ENCODE measurements at regions of chr11 and their contacts with region 1.

Region 1: GRCh38 chr11:125874556-125875124 is 12.8 kb upstream of the HYLS1 start:
- DNase-seq: peak in 7 of 9 donors; percentile 12 to 52 (median 34)
- ATAC-seq: peak; percentile 75
- H3K4me3 ChIP-seq: no peak overlapping the region
- H3K4me3 Mint-ChIP-seq: peak overlapping the region in 1 of 10 donors; percentile 17
- H3K27ac ChIP-seq: no peak overlapping the region
- H3K27ac Mint-ChIP-seq: no peak overlapping the region
- H3K4me1 ChIP-seq: no peaks in the 10 kb centered on the region
- H3K4me1 Mint-ChIP-seq: no peaks in the 10 kb centered on the region
- H3K27me3 ChIP-seq: no peaks in the 10 kb centered on the region
- H3K27me3 Mint-ChIP-seq: peaks cover 0 to 6% (median 0%) of the 10 kb centered on the region in 5 donors

Region 2: GRCh38 chr11:124961972-124962609 is 912.5 kb before region 1 on chr11:
- CTCF ChIA-PET with region 1: no interaction called
- POLR2A ChIA-PET with region 1: no interaction called
- intact Hi-C with region 1: loop called in 1 of 2 experiments (anchors 5 kb)
- DNase-seq: peak in 7 of 9 donors; percentile 44 to 74 (median 64)
- ATAC-seq: peak; percentile 96
- H3K4me3 ChIP-seq: no peak overlapping the region
- H3K4me3 Mint-ChIP-seq: no peak overlapping the region
- H3K27ac ChIP-seq: no peak overlapping the region
- H3K27ac Mint-ChIP-seq: no peak overlapping the region
- H3K4me1 ChIP-seq: no peaks in the 10 kb centered on the region
- H3K4me1 Mint-ChIP-seq: peaks cover 0 to 1% (median 0%) of the 10 kb centered on the region in 7 donors
- H3K27me3 ChIP-seq: no peaks in the 10 kb centered on the region
- H3K27me3 Mint-ChIP-seq: no peaks in the 10 kb centered on the region

Region 3: DNA sequence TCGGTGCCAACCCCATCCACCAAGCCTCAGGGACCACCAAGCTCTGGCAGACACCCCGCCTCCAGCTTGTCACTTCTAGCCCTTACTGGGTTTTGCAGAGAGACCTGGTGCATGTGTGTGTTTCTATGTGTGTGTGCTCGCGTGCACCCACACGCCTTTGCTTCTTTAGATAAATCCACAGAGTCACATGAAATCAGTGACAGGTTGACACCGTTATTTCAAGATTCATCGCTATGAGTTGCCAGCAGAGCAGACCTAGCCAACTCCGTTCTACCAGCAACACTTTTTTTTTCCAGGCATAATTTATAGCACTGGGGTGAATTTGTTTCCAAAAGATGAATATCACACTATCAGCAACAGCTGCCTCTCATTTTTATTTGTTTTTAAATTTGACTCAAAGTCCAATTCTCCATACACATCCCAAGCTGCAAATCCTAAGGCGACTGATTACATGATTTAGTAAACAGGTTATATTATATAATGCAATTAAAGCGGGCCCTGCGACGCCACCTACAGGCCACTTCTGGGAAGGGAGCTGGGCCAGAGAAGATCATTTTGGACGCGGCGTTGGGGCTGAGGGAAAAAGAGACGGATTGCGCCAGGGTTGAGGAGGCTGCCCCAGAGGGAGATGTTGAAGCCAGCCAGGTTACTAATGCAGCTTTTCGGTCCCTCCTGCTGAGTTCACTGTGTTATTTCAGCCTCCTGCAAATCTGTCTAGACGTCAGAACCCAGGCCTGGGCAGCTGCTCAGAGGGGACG is 529.0 kb before region 1 on chr11:
- CTCF ChIA-PET with region 1: no interaction called
- POLR2A ChIA-PET with region 1: no interaction called
- intact Hi-C with region 1: loop called (anchors 10 kb)
- DNase-seq: peak in 6 of 9 donors; percentile 17 to 29 (median 22)
- ATAC-seq: peak; percentile 45
- H3K4me3 ChIP-seq: no peak overlapping the region
- H3K4me3 Mint-ChIP-seq: no peak overlapping the region
- H3K27ac ChIP-seq: no peak overlapping the region
- H3K27ac Mint-ChIP-seq: no peak overlapping the region
- H3K4me1 ChIP-seq: no peaks in the 10 kb centered on the region
- H3K4me1 Mint-ChIP-seq: peaks cover 0 to 3% (median 0%) of the 10 kb centered on the region in 7 donors
- H3K27me3 ChIP-seq: no peaks in the 10 kb centered on the region
- H3K27me3 Mint-ChIP-seq: peaks cover 5 to 24% (median 10%) of the 10 kb centered on the region in 5 donors

Region 4: GRCh38 chr11:125423247-125423849 is 451.3 kb before region 1 on chr11:
- CTCF ChIA-PET with region 1: no interaction called
- POLR2A ChIA-PET with region 1: no interaction called
- intact Hi-C with region 1: loop called (anchors 2 to 5 kb)
- DNase-seq: no peak
- ATAC-seq: no peak
- H3K4me3 ChIP-seq: no peak overlapping the region
- H3K4me3 Mint-ChIP-seq: no peak overlapping the region
- H3K27ac ChIP-seq: no peak overlapping the region
- H3K27ac Mint-ChIP-seq: no peak overlapping the region
- H3K4me1 ChIP-seq: no peaks in the 10 kb centered on the region
- H3K4me1 Mint-ChIP-seq: peaks cover 0 to 5% (median 0%) of the 10 kb centered on the region in 7 donors
- H3K27me3 ChIP-seq: no peaks in the 10 kb centered on the region
- H3K27me3 Mint-ChIP-seq: peaks cover 0 to 26% (median 6%) of the 10 kb centered on the region in 5 donors

Region 5: DNA sequence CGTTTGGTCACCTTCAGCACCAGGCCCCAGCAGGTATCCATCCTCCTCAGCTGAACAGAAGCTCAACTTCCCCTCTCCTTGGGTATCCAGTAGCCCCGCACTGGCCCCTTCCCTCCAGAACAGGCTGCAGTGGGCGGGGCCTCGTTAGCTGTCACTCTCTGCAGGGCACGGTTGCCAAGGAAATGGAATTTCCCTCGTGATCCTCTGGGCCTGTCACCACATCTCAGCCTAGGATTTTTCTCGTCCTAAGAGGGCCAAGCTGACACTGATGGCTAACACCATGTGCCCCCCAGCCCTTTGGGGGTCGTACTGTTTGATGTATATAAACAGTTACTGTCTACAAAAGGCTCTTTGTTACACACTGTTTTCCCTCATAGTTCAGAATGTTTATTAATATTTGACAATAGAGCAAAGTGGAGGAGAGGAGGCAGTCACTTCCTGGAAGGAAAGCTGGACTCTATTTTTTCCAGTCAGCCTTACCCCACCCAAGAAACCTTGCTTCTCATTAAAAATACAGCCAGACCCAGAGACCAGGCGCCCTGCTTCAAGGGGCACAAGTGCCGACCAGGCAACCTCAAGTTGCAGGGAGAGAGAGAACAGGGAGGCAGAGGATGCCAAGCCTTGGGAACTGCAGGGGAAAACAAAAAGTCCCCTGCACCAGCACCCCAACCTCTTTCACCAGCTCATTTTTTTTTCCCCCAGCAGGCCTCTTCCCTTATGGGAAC is 423.1 kb before region 1 on chr11:
- CTCF ChIA-PET with region 1: no interaction called
- POLR2A ChIA-PET with region 1: no interaction called
- intact Hi-C with region 1: loop called in 1 of 2 experiments (anchors 10 kb)
- DNase-seq: no peak
- ATAC-seq: peak; percentile 33
- H3K4me3 ChIP-seq: no peak overlapping the region
- H3K4me3 Mint-ChIP-seq: peak overlapping the region in 1 of 10 donors; percentile 6
- H3K27ac ChIP-seq: no peak overlapping the region
- H3K27ac Mint-ChIP-seq: peak overlapping the region in 2 of 9 donors; percentile 18 to 46
- H3K4me1 ChIP-seq: no peaks in the 10 kb centered on the region
- H3K4me1 Mint-ChIP-seq: peaks cover 0 to 7% (median 3%) of the 10 kb centered on the region in 7 donors
- H3K27me3 ChIP-seq: no peaks in the 10 kb centered on the region
- H3K27me3 Mint-ChIP-seq: peaks cover 0 to 5% (median 0%) of the 10 kb centered on the region in 5 donors

Region 6: GRCh38 chr11:125625630-125626287 is 248.9 kb before region 1 on chr11:
- CTCF ChIA-PET with region 1: no interaction called
- POLR2A ChIA-PET with region 1: no interaction called
- intact Hi-C with region 1: loop called (anchors 1 kb)
- DNase-seq: peak; percentile 70 to 87 (median 82)
- ATAC-seq: peak; percentile 95
- H3K4me3 ChIP-seq: peak overlapping the region; percentile 91
- H3K4me3 Mint-ChIP-seq: peak overlapping the region; percentile 82 to 99 (median 98)
- H3K27ac ChIP-seq: peak overlapping the region; percentile 96
- H3K27ac Mint-ChIP-seq: peak overlapping the region; percentile 64 to 99 (median 98)
- H3K4me1 ChIP-seq: peaks cover 0 to 5% of the 10 kb centered on the region in 2 donors
- H3K4me1 Mint-ChIP-seq: peaks cover 13 to 47% (median 15%) of the 10 kb centered on the region in 7 donors
- H3K27me3 ChIP-seq: no peaks in the 10 kb centered on the region
- H3K27me3 Mint-ChIP-seq: no peaks in the 10 kb centered on the region

Region 7: GRCh38 chr11:125797641-125798040 is 77.0 kb before region 1 on chr11:
- CTCF ChIA-PET with region 1: no interaction called
- POLR2A ChIA-PET with region 1: no interaction called
- intact Hi-C with region 1: no loop called
- DNase-seq: no peak
- ATAC-seq: no peak
- H3K4me3 ChIP-seq: no peak overlapping the region
- H3K4me3 Mint-ChIP-seq: no peak overlapping the region
- H3K27ac ChIP-seq: no peak overlapping the region
- H3K27ac Mint-ChIP-seq: no peak overlapping the region
- H3K4me1 ChIP-seq: no peaks in the 10 kb centered on the region
- H3K4me1 Mint-ChIP-seq: no peaks in the 10 kb centered on the region
- H3K27me3 ChIP-seq: no peaks in the 10 kb centered on the region
- H3K27me3 Mint-ChIP-seq: peaks cover 0 to 42% (median 17%) of the 10 kb centered on the region in 5 donors